ENCODE measurements at regions of chr1 and their contacts with region 1.

Region 1: GRCh38 chr1:100459358-100460114 is 78.4 kb upstream of the GPR88 start:
- DNase-seq: peak; percentile 86
- ATAC-seq: peak; percentile 85
- H3K4me3 Mint-ChIP-seq: no peak overlapping the region
- H3K27ac Mint-ChIP-seq: no peak overlapping the region
- H3K4me1 Mint-ChIP-seq: peaks cover 50% of the 10 kb centered on the region
- H3K27me3 Mint-ChIP-seq: no peaks in the 10 kb centered on the region

Region 2: GRCh38 chr1:98813738-98814309 is 1645.7 kb before region 1 on chr1:
- CTCF ChIA-PET with region 1: no interaction called
- POLR2A ChIA-PET with region 1: no interaction called
- intact Hi-C with region 1: no loop called
- DNase-seq: peak; percentile 18
- ATAC-seq: peak; percentile 94
- H3K4me3 Mint-ChIP-seq: no peak overlapping the region
- H3K27ac Mint-ChIP-seq: peak overlapping the region; percentile 39
- H3K4me1 Mint-ChIP-seq: peaks cover 12% of the 10 kb centered on the region
- H3K27me3 Mint-ChIP-seq: no peaks in the 10 kb centered on the region

Region 3: DNA sequence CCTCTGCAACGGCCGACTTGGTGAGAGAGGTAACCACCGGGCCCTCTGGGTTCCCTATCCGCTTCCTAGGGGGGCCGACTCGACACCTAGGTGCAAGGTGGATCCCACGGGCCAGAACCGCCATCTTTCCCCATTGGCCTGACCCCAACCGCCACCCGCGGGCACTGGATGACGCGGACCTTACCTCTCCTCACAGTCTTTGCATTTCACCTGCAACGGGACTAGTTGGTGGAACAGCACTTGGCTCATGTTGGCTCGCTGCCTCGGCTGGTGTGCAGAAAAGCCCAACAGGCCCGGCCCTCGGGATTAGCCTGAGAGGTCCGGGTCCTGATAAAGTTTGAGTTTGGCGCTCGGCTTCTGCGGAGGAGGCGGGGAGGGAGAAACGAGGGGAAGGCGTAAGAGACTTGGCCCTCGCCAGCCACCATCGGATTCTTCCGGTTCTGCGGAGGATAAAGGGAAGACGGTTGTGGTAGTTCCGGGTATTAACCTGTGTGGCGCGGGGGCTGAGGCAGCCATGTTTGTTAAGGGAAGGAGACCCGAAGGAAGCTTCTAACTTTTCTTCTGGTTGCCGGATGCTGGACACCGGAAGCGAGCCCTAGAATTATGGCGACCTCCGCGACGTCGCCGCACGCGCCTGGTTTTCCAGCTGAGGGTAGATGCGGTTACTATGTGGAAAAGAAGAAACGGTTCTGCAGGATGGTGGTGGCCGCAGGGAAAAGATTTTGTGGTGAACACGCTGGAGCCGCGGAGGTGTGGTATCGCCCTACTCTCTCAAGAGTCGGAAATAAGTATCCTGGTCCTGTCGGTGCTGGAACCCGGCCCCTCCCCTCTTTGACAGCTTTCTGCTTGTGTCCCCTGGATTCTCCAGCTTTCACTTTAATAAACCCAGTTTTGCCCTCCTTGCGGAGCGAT is 326.7 kb before region 1 on chr1 and contains the starts of genes SASS6 and TRMT13:
- CTCF ChIA-PET with region 1: interaction called, 22 read pairs
- POLR2A ChIA-PET with region 1: interaction called, 3 read pairs
- intact Hi-C with region 1: loop called (anchors 1 to 2 kb)
- DNase-seq: peak; percentile 97
- ATAC-seq: peak; percentile 94
- H3K4me3 Mint-ChIP-seq: peak within 1 kb of the TSS; percentile 98
- H3K27ac Mint-ChIP-seq: peak within 1 kb of the TSS; percentile 98
- H3K4me1 Mint-ChIP-seq: peaks cover 32% of the 10 kb centered on the region
- H3K27me3 Mint-ChIP-seq: no peaks in the 10 kb centered on the region
- total RNA-seq, gene SASS6: 14.2 to 17.4 TPM
- total RNA-seq, gene TRMT13: 19.0 to 20.2 TPM

Region 4: GRCh38 chr1:100299521-100300222 is 159.9 kb before region 1 on chr1:
- CTCF ChIA-PET with region 1: interaction called, 13 read pairs
- POLR2A ChIA-PET with region 1: no interaction called
- intact Hi-C with region 1: no loop called
- DNase-seq: peak; percentile 39
- ATAC-seq: peak; percentile 86
- H3K4me3 Mint-ChIP-seq: no peak overlapping the region
- H3K27ac Mint-ChIP-seq: no peak overlapping the region
- H3K4me1 Mint-ChIP-seq: peaks cover 8% of the 10 kb centered on the region
- H3K27me3 Mint-ChIP-seq: no peaks in the 10 kb centered on the region

Region 5: GRCh38 chr1:100387209-100387608 is 72.3 kb before region 1 on chr1:
- CTCF ChIA-PET with region 1: interaction called, 11 read pairs
- POLR2A ChIA-PET with region 1: no interaction called
- intact Hi-C with region 1: no loop called
- DNase-seq: no peak
- ATAC-seq: no peak
- H3K4me3 Mint-ChIP-seq: peak overlapping the region; percentile 66
- H3K27ac Mint-ChIP-seq: peak overlapping the region; percentile 78
- H3K4me1 Mint-ChIP-seq: peaks cover 82% of the 10 kb centered on the region
- H3K27me3 Mint-ChIP-seq: no peaks in the 10 kb centered on the region

Region 6: DNA sequence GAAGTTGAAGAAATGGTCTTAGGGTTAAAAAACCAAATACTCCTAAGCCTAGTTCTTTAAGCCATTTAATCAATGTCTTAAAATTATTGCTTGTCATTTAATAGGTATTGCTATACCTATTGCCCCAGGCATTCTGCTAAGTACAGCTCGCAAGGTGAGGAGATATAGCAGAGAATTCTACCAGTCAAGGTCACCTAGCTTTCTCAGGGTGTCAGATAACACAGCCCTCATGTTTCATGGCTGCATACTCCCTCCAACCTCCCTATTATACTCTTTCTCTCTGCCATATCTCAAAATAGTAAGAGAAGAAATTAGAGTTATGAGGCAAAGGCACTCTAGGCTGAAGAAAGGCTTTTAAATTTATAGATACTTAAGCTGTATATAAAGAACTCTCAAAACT is 10.0 kb after region 1 on chr1:
- CTCF ChIA-PET with region 1: interaction called, 26 read pairs
- POLR2A ChIA-PET with region 1: no interaction called
- intact Hi-C with region 1: no loop called
- DNase-seq: no peak
- ATAC-seq: no peak
- H3K4me3 Mint-ChIP-seq: no peak overlapping the region
- H3K27ac Mint-ChIP-seq: no peak overlapping the region
- H3K4me1 Mint-ChIP-seq: peaks cover 15% of the 10 kb centered on the region
- H3K27me3 Mint-ChIP-seq: no peaks in the 10 kb centered on the region

Region 7: GRCh38 chr1:101288491-101288944 is 829.0 kb after region 1 on chr1:
- CTCF ChIA-PET with region 1: interaction called, 3 read pairs
- POLR2A ChIA-PET with region 1: no interaction called
- intact Hi-C with region 1: loop called in 1 of 2 experiments (anchors 5 kb)
- DNase-seq: peak; percentile 80
- ATAC-seq: peak; percentile 31
- H3K4me3 Mint-ChIP-seq: no peak overlapping the region
- H3K27ac Mint-ChIP-seq: peak overlapping the region; percentile 58
- H3K4me1 Mint-ChIP-seq: peaks cover 92% of the 10 kb centered on the region
- H3K27me3 Mint-ChIP-seq: no peaks in the 10 kb centered on the region